Activated naive CD4-positive, alpha-beta T cell treated with anti-CD3 and anti-CD28 coated beads for 36 hours (primary cell): ENCODE measurements at regions of chr21 and their contacts with region 1.

Region 1: DNA sequence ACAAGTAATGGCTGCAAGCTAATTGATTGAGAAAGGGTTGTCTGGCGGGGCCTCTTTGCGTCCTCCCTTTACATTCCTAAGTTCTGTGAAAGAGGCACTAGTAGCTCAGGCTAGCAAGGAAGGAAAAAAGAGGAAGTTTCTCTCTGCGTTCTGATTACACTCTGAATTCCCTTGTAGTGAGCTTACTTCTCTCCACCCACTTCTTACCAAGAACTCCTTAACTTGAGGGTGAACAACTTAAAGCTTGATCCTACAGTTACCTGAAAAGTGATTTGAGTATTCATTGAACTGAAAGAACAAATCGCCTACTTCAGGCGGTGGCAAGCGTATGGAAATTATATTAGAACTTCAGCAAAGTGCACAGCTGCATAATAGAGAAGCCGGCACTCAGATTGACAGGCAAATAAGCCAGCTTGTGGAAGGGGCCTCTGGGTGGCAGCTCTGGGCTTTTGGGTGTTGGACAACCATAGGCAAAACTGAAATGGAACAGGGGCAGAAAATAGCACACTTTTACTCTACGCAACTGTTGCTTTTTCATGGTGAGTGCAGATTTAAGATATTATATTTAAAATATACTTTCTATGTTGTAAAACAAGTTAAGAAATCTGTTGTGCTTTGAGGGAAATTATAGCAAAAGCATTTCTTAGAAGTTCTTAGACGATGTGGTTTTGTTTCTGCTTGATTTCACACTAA is 464.5 kb downstream of the USP25 start:
- DNase-seq: peak; percentile 34
- H3K4me3 Mint-ChIP-seq: peak overlapping the region; percentile 57
- H3K27ac Mint-ChIP-seq: no peak overlapping the region
- H3K4me1 Mint-ChIP-seq: peaks cover 7% of the 10 kb centered on the region
- H3K27me3 Mint-ChIP-seq: no peaks in the 10 kb centered on the region

Region 2: DNA sequence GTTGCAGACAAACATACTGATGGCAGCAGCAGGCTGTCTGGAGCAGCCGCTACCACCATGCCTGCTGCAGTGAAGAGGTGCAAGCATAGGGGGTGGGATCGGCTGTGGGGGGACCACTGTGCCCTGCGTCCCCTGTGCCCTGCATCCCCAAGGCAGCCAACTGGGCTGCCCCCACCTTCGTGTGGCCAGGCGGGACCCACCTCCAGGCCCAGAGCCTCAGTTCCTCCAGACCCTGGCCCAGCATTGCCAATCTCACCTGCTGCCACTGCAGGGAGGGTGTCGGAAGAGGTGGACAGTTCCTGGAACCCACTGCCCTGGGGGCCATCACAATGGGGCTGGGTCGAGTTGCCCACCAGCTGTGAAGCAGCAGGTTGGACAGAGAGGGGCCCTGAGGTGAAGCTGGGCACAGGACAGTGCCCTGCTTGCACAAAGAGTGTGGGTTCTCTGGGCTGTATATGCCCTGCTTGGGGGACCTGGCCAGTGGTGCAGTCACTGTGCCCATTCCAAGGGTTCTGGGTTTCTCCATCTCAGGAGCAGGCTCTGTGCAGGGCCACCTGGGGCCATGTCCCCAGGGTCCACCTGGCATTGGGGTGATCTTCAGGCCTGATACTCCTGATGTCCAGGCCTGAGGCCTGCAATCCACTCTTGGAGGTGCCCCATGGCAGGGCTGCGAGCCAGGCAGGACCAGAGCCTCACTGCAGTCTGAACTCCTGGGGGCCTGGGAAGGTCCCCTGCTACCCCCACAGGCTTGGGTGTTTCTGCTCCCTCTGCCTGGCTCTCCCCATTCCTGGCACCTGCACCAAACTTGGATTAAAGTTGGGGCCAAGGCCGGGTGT is 868.0 kb before region 1 on chr21:
- CTCF ChIA-PET with region 1: no interaction called
- intact Hi-C with region 1: no loop called
- DNase-seq: no peak
- H3K4me3 Mint-ChIP-seq: no peak overlapping the region
- H3K27ac Mint-ChIP-seq: no peak overlapping the region
- H3K4me1 Mint-ChIP-seq: peaks cover 6% of the 10 kb centered on the region
- H3K27me3 Mint-ChIP-seq: peaks cover 9% of the 10 kb centered on the region

Region 3: DNA sequence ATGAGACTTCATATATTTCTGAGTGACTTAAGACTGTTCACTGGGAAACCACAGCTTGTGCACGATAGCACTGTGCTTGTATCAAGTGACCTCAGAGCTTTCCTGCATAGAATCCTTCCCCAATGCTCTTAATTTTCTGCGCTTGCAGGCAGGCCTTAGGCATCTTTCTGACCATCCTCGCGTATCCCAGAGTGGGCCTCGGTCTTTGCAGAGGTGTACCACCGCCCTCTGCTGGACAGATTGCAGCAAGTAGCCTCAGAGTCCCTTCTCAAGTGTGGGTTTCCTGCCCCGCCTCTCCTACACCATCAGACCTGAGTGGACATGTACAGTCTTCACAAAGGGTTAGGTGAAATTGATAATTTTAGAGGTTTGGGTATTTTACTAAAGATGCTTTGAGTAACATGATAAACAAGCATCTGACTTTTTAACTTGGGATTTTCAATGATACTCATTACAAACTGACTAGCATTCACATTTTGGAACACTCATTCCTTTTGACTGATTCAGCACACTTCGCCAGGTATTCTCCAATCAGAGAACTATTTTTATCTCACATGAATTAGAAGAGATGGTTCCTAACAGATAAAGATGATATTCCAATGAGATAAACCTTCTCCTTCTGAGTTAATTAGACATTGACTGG is 711.0 kb before region 1 on chr21:
- CTCF ChIA-PET with region 1: no interaction called
- intact Hi-C with region 1: no loop called
- DNase-seq: peak; percentile 89
- H3K4me3 Mint-ChIP-seq: no peak overlapping the region
- H3K27ac Mint-ChIP-seq: no peak overlapping the region
- H3K4me1 Mint-ChIP-seq: peaks cover 27% of the 10 kb centered on the region
- H3K27me3 Mint-ChIP-seq: no peaks in the 10 kb centered on the region

Region 4: GRCh38 chr21:16134134-16134533 is 60.1 kb before region 1 on chr21:
- CTCF ChIA-PET with region 1: no interaction called
- intact Hi-C with region 1: no loop called
- DNase-seq: no peak
- H3K4me3 Mint-ChIP-seq: no peak overlapping the region
- H3K27ac Mint-ChIP-seq: no peak overlapping the region
- H3K4me1 Mint-ChIP-seq: no peaks in the 10 kb centered on the region
- H3K27me3 Mint-ChIP-seq: peaks cover 2% of the 10 kb centered on the region

Region 5: GRCh38 chr21:16308269-16308668 is 114.0 kb after region 1 on chr21:
- CTCF ChIA-PET with region 1: interaction called, 3 read pairs
- intact Hi-C with region 1: loop called (anchors 2 kb)
- DNase-seq: no peak
- H3K4me3 Mint-ChIP-seq: no peak overlapping the region
- H3K27ac Mint-ChIP-seq: no peak overlapping the region
- H3K4me1 Mint-ChIP-seq: peaks cover 10% of the 10 kb centered on the region
- H3K27me3 Mint-ChIP-seq: peaks cover 6% of the 10 kb centered on the region

Region 6: DNA sequence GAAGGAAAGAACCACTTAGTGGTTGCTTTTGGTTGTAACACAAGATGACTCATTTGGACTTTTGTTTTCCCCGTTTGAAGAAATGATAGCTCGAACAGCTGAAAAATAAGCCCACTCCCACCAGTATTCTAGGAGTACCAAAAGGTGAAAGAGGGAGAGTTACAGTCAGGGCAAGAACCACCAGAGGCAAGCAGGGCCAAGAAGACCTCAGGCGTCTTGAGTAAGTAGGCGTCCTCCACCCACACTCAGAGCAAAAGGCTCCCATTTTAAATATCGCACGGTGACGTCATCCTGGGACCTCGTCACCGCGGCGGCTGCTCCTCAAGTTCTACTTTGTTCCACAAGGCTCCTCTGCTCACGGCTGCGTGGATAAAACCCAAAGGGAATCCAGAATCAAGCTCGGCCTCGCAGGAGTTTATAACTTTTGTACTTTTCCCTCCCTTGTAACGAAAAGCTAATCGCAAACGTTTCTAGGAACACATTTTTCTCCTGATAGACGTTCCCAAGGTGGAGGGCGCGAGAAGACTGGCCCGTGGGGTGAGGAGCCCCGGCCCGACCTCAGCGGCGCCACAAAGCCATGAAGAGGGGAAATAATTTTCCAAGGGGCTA is 1417.3 kb after region 1 on chr21:
- CTCF ChIA-PET with region 1: no interaction called
- intact Hi-C with region 1: loop called (anchors 5 kb)
- DNase-seq: peak; percentile 88
- H3K4me3 Mint-ChIP-seq: peak overlapping the region; percentile 83
- H3K27ac Mint-ChIP-seq: peak overlapping the region; percentile 91
- H3K4me1 Mint-ChIP-seq: peaks cover 31% of the 10 kb centered on the region
- H3K27me3 Mint-ChIP-seq: no peaks in the 10 kb centered on the region